HEK293 (cell line): ENCODE measurements at regions of chr11 and their contacts with region 1.

Region 1: DNA sequence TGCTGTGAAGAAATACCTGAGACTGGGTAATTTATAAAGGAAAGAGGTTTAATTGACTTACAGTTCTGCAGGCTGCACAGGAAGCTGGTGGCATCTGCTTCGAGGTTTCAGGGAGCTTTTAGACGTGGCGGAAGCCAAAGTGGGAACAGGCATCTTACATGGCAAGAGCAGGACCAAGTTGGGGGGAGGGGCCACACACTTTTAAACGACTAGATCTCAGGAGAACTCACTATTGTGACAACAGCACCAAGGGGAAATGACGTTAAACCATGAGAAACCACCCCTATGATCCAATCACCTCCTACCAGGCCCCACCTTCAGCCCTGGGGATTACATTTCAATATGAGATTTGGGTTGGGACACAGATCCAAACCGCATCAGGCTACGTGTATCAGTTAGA is 11.1 kb upstream of the SCGB1D4 start:
- H3K4me3 ChIP-seq: no peak overlapping the region
- H3K27ac ChIP-seq: no peak overlapping the region
- H3K4me1 ChIP-seq: no peaks in the 10 kb centered on the region
- CTCF ChIP-seq: no peak

Region 2: GRCh38 chr11:62172294-62172693 is 137.7 kb before region 1 on chr11:
- CTCF ChIA-PET with region 1: interaction called, 12 read pairs
- POLR2A ChIA-PET with region 1: no interaction called
- H3K4me3 ChIP-seq: no peak overlapping the region
- H3K27ac ChIP-seq: no peak overlapping the region
- H3K4me1 ChIP-seq: no peaks in the 10 kb centered on the region
- CTCF ChIP-seq: no peak

Region 3: DNA sequence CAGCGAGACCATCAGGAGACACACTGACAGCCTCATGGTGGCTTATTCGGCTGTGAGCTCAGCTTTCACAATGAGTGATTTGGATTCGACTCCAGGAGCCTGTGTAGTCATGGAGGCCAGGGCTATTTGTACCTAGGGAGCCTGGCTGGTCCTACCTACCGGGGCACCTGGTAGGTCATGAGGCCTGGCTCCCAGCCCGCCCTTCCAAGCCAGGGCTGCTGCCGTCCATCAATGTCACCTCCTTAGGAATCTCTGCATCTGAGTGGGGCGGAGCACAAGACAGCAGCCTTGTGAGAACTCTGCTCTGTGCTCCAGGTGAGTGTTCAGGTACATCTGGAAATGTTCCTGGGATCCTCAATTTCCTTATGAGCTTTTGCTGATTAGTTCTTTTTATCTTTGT is 11.0 kb before region 1 on chr11 and contains the start of gene SCGB1D4:
- CTCF ChIA-PET with region 1: interaction called, 13 read pairs
- POLR2A ChIA-PET with region 1: no interaction called
- H3K4me3 ChIP-seq: no peak within 1 kb of the TSS
- H3K27ac ChIP-seq: no peak within 1 kb of the TSS
- H3K4me1 ChIP-seq: no peaks in the 10 kb centered on the region
- CTCF ChIP-seq: no peak